Activated CD4-positive, alpha-beta memory T cell treated with anti-CD3 and anti-CD28 coated beads, Interleukin-2, amount 10 ng/mL, durations not matched to agents 7 days and 5 days (primary cell): ENCODE measurements at regions of chr1 and their contacts with region 1.

Region 1: GRCh38 chr1:231612393-231613089 is 14.0 kb upstream of the DISC1 start:
- DNase-seq: peak; percentile 81
- H3K4me3 Mint-ChIP-seq: peak overlapping the region; percentile 56
- H3K27ac Mint-ChIP-seq: peak overlapping the region; percentile 94
- H3K4me1 Mint-ChIP-seq: peaks cover 46% of the 10 kb centered on the region
- H3K27me3 Mint-ChIP-seq: peaks cover 7% of the 10 kb centered on the region

Region 2: GRCh38 chr1:231407547-231408396 is 204.8 kb before region 1 on chr1:
- CTCF ChIA-PET with region 1: no interaction called
- POLR2A ChIA-PET with region 1: no interaction called
- DNase-seq: no peak
- H3K4me3 Mint-ChIP-seq: no peak overlapping the region
- H3K27ac Mint-ChIP-seq: no peak overlapping the region
- H3K4me1 Mint-ChIP-seq: peaks cover 13% of the 10 kb centered on the region
- H3K27me3 Mint-ChIP-seq: no peaks in the 10 kb centered on the region

Region 3: DNA sequence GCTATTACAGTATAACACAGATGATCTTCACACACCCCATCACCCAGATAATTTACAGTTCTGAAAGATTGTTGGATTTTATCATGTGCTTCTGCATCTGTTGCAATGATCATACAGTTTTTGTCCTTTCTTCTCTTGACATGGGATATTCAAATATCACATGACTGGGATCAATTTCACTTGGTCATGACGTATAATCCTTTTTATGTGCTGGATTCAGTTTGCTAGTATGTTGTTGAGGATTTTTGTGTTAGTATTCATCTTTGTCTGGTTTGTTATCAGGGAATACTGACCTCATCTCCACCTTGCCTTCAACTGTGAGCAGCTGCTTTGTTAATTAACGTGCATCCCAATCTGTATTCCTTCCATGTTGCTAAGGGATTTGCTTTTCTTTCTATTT is 30.7 kb before region 1 on chr1:
- CTCF ChIA-PET with region 1: no interaction called
- POLR2A ChIA-PET with region 1: no interaction called
- DNase-seq: no peak
- H3K4me3 Mint-ChIP-seq: no peak overlapping the region
- H3K27ac Mint-ChIP-seq: no peak overlapping the region
- H3K4me1 Mint-ChIP-seq: peaks cover 2% of the 10 kb centered on the region
- H3K27me3 Mint-ChIP-seq: peaks cover 2% of the 10 kb centered on the region

Region 4: DNA sequence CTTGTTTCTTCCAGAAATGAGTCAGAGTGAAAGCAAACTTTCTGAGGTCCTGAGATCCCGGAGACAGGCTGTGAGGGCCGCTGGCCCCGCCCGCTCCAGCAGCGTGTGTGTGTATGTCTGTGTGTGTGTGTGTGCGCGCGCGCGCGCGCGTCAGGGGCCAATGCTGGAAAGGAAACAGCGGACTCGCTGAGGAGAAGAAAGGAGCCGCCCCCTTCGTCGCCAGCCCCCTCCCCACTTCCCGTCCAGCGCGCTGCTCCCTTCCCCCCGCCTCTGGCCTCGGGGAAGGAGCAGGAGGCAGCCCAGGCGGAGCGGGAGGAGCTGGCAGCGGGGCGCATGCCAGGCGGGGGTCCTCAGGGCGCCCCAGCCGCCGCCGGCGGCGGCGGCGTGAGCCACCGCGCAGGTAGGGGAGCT is 14.0 kb after region 1 on chr1 and contains the start of gene DISC1:
- CTCF ChIA-PET with region 1: interaction called, 8 read pairs
- POLR2A ChIA-PET with region 1: interaction called, 10 read pairs
- DNase-seq: peak; percentile 79
- H3K4me3 Mint-ChIP-seq: peak within 1 kb of the TSS; percentile 80
- H3K27ac Mint-ChIP-seq: peak within 1 kb of the TSS; percentile 75
- H3K4me1 Mint-ChIP-seq: peaks cover 37% of the 10 kb centered on the region
- H3K27me3 Mint-ChIP-seq: peaks cover 28% of the 10 kb centered on the region
- total RNA-seq, gene DISC1: 17.5 to 18.0 TPM